ENCODE measurements at regions of chr4 and their contacts with region 1.

Region 1: DNA sequence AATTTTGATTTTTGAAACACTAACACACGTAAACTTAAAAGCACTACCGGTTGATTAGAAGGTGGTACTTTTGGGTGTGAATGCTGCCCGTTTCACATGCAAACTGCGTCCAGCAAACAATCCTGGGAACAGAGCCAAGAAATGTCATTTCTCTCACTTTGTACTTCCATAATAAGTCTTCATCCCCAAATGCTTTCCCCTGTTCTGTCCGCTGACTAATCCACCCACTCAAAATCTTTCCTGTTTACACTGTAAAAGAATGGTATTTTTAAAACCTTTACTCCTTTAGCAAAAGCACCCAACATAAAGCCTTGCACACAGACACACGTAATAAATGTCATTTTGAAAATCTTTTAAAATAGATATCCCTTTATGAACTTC is 39.1 kb upstream of the PDLIM5 start:
- DNase-seq: no peak
- ATAC-seq: no peak
- H3K4me3 ChIP-seq: peak overlapping the region in 3 of 4 donors; percentile 4 to 35 (median 12)
- H3K27ac ChIP-seq: peak overlapping the region; percentile 87 to 94 (median 88)
- H3K4me1 ChIP-seq: peaks cover 46 to 66% of the 10 kb centered on the region in 2 donors
- H3K27me3 ChIP-seq: no peaks in the 10 kb centered on the region
- CTCF ChIP-seq: no peak
- POLR2A ChIP-seq: no peak

Region 2: GRCh38 chr4:94221916-94222315 is 190.7 kb before region 1 on chr4:
- in situ Hi-C with region 1: no loop called
- intact Hi-C with region 1: no loop called
- DNase-seq: no peak
- ATAC-seq: no peak
- H3K4me3 ChIP-seq: no peak overlapping the region
- H3K27ac ChIP-seq: no peak overlapping the region
- H3K4me1 ChIP-seq: peaks cover 0 to 4% of the 10 kb centered on the region in 2 donors
- H3K27me3 ChIP-seq: no peaks in the 10 kb centered on the region
- CTCF ChIP-seq: no peak
- POLR2A ChIP-seq: no peak

Region 3: DNA sequence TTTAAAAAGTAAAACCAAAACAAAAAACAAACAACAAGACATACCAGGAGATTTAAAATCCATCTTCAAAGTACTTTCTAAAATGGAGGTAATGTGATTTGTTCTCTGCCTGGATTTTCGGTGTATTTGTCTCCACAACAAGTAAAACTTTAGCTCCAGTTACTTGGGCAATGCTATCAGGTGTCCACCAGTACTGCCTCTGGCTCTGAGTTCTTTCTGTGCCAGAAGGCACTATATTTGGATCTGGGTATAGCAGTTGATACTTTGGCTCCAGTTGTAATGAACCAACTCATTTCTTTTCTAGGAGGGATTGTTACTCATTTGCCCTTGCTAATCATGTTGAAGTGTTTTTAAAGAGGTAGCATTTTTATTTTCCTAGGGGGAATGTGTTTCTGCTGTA is 29.6 kb after region 1 on chr4:
- in situ Hi-C with region 1: no loop called
- intact Hi-C with region 1: loop called (anchors 2 kb)
- DNase-seq: peak; percentile 65 to 72
- ATAC-seq: peak; percentile 99
- H3K4me3 ChIP-seq: peak overlapping the region in 2 of 4 donors; percentile 15 to 16
- H3K27ac ChIP-seq: peak overlapping the region; percentile 81 to 86 (median 84)
- H3K4me1 ChIP-seq: peaks cover 22 to 37% of the 10 kb centered on the region in 2 donors
- H3K27me3 ChIP-seq: no peaks in the 10 kb centered on the region
- CTCF ChIP-seq: no peak
- POLR2A ChIP-seq: no peak

Region 4: DNA sequence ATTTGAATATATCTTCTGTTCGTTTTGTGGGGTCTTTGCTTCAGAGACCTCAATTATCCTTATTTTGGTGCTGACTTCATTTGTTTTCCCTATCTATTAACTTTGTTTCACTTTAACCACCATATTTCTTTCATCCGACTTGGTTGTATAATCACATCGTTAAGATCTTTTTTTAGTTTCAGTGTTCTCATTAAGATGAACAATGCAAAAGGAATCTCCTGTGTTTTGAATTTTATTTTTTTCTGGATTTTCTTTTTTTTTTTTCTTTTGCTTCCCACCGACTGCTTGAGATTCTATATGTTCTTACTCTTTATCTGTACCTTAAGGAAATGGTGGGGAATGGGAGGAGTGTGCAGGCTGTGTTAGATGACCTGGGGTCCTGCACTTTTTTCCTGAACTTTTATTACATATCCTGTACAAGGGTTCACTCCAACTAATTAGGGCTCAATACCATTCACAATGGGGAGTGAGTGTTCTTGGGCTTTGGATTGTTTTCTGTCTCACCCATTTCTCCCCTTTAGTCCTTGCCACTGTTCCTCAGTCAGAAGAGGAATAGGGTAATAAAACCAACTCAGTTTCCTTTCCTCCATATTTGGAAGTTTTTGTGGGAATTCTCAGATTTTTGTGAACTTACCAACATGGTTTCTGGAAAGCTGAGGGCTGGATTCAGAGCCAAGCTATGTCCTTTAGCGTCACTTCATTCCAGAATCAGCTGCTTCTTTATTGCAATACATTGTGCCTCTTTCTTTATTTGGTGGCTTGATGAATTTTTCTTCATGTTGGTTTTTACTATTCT is 301.9 kb after region 1 on chr4:
- in situ Hi-C with region 1: no loop called
- intact Hi-C with region 1: no loop called
- DNase-seq: no peak
- ATAC-seq: no peak
- H3K4me3 ChIP-seq: no peak overlapping the region
- H3K27ac ChIP-seq: no peak overlapping the region
- H3K4me1 ChIP-seq: no peaks in the 10 kb centered on the region
- H3K27me3 ChIP-seq: peaks cover 0 to 4% (median 0%) of the 10 kb centered on the region in 3 donors
- CTCF ChIP-seq: no peak
- POLR2A ChIP-seq: no peak

Measured in gastrocnemius medialis (tissue), 4 donors.